ENCODE measurements at regions of chr10 and their contacts with region 1.

Region 1: DNA sequence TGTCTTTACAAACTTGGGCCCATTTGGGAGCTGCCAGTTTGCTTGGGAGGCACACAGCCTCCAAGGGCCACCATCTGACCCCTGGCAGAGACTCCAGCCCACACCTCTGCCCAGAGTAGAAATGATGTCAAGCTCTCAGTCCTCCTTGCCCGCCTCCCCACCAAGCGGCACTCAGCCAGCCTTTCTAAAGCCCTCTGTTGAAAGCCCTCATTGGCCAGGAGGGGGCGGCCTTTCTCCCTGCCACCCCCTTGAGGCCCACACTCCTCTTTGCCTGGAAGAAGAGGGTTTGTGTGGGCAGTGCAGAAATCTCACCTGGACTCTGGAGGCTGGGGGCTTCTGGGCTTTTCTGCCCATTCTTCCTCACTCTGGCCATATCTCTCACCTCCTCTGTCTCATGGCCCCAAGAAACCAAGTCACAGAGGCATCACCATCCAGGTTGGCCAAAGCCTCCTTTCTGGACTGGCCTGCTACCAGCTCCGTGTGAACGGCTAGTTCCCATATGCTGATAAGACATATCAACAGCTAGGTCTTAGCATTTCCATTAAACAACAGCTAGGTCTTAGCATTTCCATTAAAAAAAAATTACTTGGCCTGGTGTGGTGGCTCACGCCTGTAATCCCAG is 36.1 kb downstream of the UBTD1 start:
- DNase-seq: no peak
- H3K4me3 ChIP-seq: no peak overlapping the region
- H3K27ac ChIP-seq: no peak overlapping the region
- H3K4me1 ChIP-seq: peaks cover 13% of the 10 kb centered on the region
- H3K27me3 ChIP-seq: no peaks in the 10 kb centered on the region
- CTCF ChIP-seq: peak; percentile 45 to 73

Region 2: DNA sequence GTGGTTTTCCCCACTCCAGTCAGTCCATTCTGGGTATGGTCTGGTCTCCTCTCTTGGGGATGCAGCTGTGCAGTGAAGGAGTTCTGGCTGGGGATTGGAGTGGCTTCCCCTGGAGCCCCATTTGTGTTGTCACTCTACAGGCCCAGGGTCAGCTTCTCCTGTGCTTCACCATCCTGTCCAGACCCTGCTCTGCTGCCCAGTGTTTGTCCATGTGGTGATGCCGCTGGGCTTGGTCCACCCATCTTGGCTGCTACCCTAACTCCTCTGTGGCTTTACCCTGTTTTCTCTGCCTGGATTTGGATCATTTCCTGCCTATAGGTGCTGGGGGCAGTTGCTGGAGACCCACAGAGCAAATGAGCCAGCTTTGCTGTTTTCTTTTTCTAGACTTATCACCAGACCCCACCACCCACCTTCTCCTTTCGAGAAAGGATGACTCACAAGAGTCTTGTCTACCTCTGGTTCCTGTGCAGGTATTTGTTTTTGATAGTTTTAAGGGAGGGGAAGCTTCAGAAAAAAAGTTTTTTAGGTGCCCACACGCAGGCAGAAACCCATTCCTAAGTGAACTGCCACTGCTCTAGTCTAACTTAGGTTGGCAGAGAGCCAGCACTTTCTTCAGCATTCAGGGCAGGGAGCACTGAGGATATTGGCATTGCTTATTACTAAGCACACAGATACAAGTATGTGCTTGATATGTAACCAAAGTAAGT is 80.4 kb before region 1 on chr10:
- CTCF ChIA-PET with region 1: no interaction called
- dilution Hi-C with region 1: loop called (anchors 5 kb)
- in situ Hi-C with region 1: no loop called
- intact Hi-C with region 1: no loop called
- DNase-seq: peak; percentile 35
- H3K4me3 ChIP-seq: no peak overlapping the region
- H3K27ac ChIP-seq: no peak overlapping the region
- H3K4me1 ChIP-seq: peaks cover 16% of the 10 kb centered on the region
- H3K27me3 ChIP-seq: no peaks in the 10 kb centered on the region
- CTCF ChIP-seq: no peak

Region 3: GRCh38 chr10:97596101-97597062 is 61.5 kb after region 1 on chr10:
- CTCF ChIA-PET with region 1: no interaction called
- dilution Hi-C with region 1: loop called (anchors 5 kb)
- in situ Hi-C with region 1: no loop called
- intact Hi-C with region 1: no loop called
- DNase-seq: peak; percentile 78
- H3K4me3 ChIP-seq: no peak overlapping the region
- H3K27ac ChIP-seq: no peak overlapping the region
- H3K4me1 ChIP-seq: peaks cover 25% of the 10 kb centered on the region
- H3K27me3 ChIP-seq: no peaks in the 10 kb centered on the region
- CTCF ChIP-seq: no peak